Endothelial cell of umbilical vein (primary cell): ENCODE measurements at regions of chr10 and their contacts with region 1.

Region 1: GRCh38 chr10:34666008-34666705 is 148.9 kb downstream of the PARD3 start:
- DNase-seq: peak; percentile 83
- H3K4me3 ChIP-seq: no peak overlapping the region
- H3K27ac ChIP-seq: no peak overlapping the region
- H3K4me1 ChIP-seq: no peaks in the 10 kb centered on the region
- H3K27me3 ChIP-seq: no peaks in the 10 kb centered on the region
- CTCF ChIP-seq: peak; percentile 45 to 46
- POLR2A ChIP-seq: no peak

Region 2: DNA sequence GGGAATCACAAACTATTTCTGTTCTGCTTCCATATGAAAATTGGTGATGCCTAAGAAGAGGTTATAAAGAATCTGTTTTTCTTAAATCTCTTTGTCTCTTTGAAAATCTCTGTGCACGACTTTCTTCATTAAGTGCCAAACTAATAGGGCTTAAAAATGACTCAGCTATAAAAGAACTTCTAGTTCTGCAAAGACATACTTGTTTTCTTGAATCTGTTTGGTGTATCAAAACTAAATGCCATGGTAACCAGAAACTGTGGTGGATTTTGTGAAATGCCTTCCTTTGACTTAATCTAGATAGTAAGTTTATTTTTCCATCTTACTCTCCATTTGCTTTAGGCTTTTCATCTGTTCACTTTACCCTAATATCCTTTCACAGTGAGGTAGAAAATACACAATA is 268.8 kb before region 1 on chr10:
- CTCF ChIA-PET with region 1: no interaction called
- POLR2A ChIA-PET with region 1: no interaction called
- dilution Hi-C with region 1: no loop called
- intact Hi-C with region 1: no loop called
- DNase-seq: no peak
- H3K4me3 ChIP-seq: no peak overlapping the region
- H3K27ac ChIP-seq: no peak overlapping the region
- H3K4me1 ChIP-seq: no peaks in the 10 kb centered on the region
- H3K27me3 ChIP-seq: no peaks in the 10 kb centered on the region
- CTCF ChIP-seq: no peak
- POLR2A ChIP-seq: no peak

Region 3: GRCh38 chr10:34462056-34462455 is 204.1 kb before region 1 on chr10:
- CTCF ChIA-PET with region 1: no interaction called
- POLR2A ChIA-PET with region 1: no interaction called
- dilution Hi-C with region 1: no loop called
- intact Hi-C with region 1: no loop called
- DNase-seq: no peak
- H3K4me3 ChIP-seq: no peak overlapping the region
- H3K27ac ChIP-seq: no peak overlapping the region
- H3K4me1 ChIP-seq: no peaks in the 10 kb centered on the region
- H3K27me3 ChIP-seq: no peaks in the 10 kb centered on the region
- CTCF ChIP-seq: no peak
- POLR2A ChIP-seq: no peak

Region 4: GRCh38 chr10:34655286-34656170 is 10.6 kb before region 1 on chr10:
- CTCF ChIA-PET with region 1: interaction called, 24 read pairs
- POLR2A ChIA-PET with region 1: no interaction called
- dilution Hi-C with region 1: no loop called
- intact Hi-C with region 1: no loop called
- DNase-seq: peak; percentile 86
- H3K4me3 ChIP-seq: no peak overlapping the region
- H3K27ac ChIP-seq: no peak overlapping the region
- H3K4me1 ChIP-seq: no peaks in the 10 kb centered on the region
- H3K27me3 ChIP-seq: no peaks in the 10 kb centered on the region
- CTCF ChIP-seq: peak; percentile 53 to 64
- POLR2A ChIP-seq: no peak

Region 5: DNA sequence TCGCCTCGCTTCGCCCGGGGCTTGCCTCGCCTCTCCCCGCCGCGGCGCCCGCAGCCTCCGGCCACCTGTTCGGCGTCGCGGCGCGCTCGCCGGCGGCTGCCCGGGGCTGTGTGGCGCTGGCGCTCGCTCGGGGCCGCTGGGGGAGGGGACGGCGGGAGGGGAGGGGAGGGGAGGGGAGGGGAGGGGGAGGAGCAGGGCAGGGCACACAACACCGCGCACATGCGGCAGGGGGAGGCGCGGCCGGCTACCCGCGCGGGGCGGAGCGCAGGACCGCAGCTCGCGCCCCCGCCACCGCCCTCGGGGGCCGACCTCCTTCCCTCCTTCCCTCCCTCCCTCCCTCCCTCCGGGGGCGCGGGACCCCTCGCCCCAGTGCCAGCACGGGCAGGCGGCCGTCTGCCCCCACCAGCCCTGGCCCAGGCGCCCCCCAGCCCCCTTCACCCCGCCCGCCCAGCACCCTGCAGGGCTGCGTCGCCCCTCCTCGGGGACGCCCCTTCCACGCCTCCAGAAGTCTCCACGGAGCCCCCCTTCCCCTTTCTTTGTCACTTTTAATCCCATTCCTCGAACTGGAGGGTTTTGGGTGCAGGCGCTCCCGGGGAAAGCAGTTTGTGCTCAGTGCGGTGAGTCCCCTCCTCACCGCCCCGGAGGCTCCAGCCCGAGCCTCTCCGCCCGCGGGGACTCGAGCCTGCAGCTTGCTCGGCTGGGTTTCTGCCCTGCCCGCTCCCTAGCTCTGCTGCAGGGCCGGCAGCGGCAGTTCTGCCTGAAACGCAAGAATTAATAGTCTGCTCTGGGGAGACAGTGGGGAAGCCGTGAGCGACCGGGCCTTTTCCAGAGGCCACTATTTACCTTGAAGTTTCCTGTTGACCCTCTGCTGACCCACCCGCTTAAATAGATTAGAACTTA is 149.3 kb after region 1 on chr10 and contains the start of gene PARD3:
- CTCF ChIA-PET with region 1: interaction called, 13 read pairs
- POLR2A ChIA-PET with region 1: no interaction called
- dilution Hi-C with region 1: no loop called
- intact Hi-C with region 1: loop called (anchors 5 kb)
- DNase-seq: peak; percentile 54
- H3K4me3 ChIP-seq: peak within 1 kb of the TSS; percentile 53 to 92 (median 65)
- H3K27ac ChIP-seq: peak within 1 kb of the TSS; percentile 50
- H3K4me1 ChIP-seq: peaks cover 14% of the 10 kb centered on the region
- H3K27me3 ChIP-seq: peaks cover 3 to 6% of the 10 kb centered on the region in 2 experiments
- CTCF ChIP-seq: no peak
- POLR2A ChIP-seq: no peak
- total RNA-seq, gene PARD3: 20.2 and 24.1 TPM in 2 replicates

Region 6: GRCh38 chr10:34933676-34934075 is 267.5 kb after region 1 on chr10:
- CTCF ChIA-PET with region 1: interaction called, 12 read pairs
- POLR2A ChIA-PET with region 1: no interaction called
- dilution Hi-C with region 1: no loop called
- intact Hi-C with region 1: no loop called
- DNase-seq: no peak
- H3K4me3 ChIP-seq: no peak overlapping the region
- H3K27ac ChIP-seq: no peak overlapping the region
- H3K4me1 ChIP-seq: peaks cover 4% of the 10 kb centered on the region
- H3K27me3 ChIP-seq: no peaks in the 10 kb centered on the region
- CTCF ChIP-seq: no peak
- POLR2A ChIP-seq: no peak

Region 7: GRCh38 chr10:34985823-34986222 is 319.7 kb after region 1 on chr10:
- CTCF ChIA-PET with region 1: interaction called, 12 read pairs
- POLR2A ChIA-PET with region 1: no interaction called
- dilution Hi-C with region 1: no loop called
- intact Hi-C with region 1: loop called (anchors 5 kb)
- DNase-seq: no peak
- H3K4me3 ChIP-seq: no peak overlapping the region
- H3K27ac ChIP-seq: no peak overlapping the region
- H3K4me1 ChIP-seq: no peaks in the 10 kb centered on the region
- H3K27me3 ChIP-seq: peaks cover 0 to 3% of the 10 kb centered on the region in 2 experiments
- CTCF ChIP-seq: no peak
- POLR2A ChIP-seq: no peak

Region 8: GRCh38 chr10:35218339-35218955 is 552.3 kb after region 1 on chr10:
- CTCF ChIA-PET with region 1: interaction called, 4 read pairs
- POLR2A ChIA-PET with region 1: no interaction called
- dilution Hi-C with region 1: no loop called
- intact Hi-C with region 1: loop called (anchors 5 kb)
- DNase-seq: peak; percentile 86
- H3K4me3 ChIP-seq: no peak overlapping the region
- H3K27ac ChIP-seq: no peak overlapping the region
- H3K4me1 ChIP-seq: peaks cover 3% of the 10 kb centered on the region
- H3K27me3 ChIP-seq: no peaks in the 10 kb centered on the region
- CTCF ChIP-seq: peak; percentile 62 to 80
- POLR2A ChIP-seq: no peak